ENCODE measurements at regions of chr1 and their contacts with region 1.

Region 1: DNA sequence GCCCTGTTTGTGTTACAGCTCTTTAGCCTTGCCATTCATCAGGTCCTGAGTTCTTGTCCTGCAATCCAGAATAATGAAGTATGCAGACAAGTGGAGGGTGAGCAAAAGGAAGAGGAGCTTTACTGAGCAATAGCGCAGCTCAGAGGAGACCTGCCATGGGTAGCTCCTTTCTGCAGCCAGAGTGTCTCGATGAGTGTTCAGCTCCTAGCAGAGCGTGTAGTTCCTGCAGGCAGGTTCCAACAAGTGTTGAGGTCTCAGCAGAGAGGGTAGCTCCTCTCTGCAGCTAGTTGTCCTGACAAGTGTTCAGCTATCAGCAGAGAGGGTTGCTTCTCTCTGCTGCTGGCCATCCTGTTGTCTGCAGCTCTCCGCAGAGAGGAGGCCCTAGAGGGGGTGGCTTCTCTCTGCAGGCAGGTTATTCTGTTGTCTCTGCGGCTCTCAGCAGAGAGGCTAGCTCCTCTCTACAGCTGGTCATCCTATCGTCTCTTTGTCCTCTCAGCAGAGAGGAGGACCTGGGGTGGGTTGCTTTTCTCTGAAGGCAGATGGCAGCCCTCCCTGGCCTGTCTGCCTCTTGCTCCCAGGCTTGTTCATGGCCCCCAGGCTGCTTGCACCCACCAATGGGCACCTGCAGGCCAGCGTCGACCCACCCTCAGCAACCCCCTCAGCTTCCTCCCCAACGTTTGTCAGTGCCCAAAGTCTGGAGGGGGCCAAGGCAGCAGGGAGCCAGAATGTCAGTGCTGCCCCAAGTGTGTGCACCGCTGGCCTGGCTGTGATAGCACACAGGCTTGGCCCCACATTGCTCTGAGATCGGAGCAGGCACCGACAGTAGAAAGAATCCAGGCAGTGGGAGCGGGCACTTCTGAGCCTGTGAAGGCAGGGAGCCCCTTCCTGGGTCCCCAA is 112.5 kb upstream of the RUNX3 start:
- DNase-seq: no peak
- H3K4me3 ChIP-seq: no peak overlapping the region
- H3K27ac ChIP-seq: no peak overlapping the region
- H3K4me1 ChIP-seq: no peaks in the 10 kb centered on the region
- H3K27me3 ChIP-seq: peaks cover 29% of the 10 kb centered on the region
- CTCF ChIP-seq: no peak

Region 2: DNA sequence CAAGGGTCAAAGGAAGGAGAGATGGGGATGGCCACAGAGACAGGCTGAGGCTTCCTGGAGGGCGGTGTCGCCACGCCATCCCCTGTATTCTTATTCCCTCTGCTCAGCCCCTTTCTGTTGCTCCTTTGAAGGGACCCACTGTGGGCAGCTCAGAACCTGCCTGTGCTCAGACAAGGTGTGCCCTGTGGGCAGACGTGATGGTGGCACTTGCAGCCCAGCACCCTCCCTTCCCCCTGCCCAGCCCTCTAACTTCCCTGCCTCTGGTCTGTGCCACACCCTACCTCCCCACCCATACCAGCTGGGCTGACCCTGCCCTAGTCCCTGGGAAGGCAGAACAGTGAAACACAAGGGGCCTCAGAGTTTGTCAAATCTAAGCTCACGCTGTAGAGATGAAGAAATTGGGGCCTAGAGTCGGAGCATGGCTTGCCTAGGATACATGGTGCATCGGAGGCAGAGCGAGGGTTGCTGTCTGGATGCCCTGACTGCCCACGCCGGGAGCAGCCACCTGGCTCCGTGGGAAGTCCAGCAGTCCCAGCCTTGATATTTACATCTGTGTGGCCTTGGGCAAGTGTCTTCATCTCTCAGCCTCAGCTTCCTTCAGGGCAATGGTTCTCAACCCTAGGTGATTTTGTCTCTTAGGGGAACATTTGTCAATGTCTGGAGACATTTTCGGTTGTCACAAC is 43.9 kb before region 1 on chr1:
- CTCF ChIA-PET with region 1: no interaction called
- POLR2A ChIA-PET with region 1: no interaction called
- intact Hi-C with region 1: loop called (anchors 2 kb)
- DNase-seq: no peak
- H3K4me3 ChIP-seq: no peak overlapping the region
- H3K27ac ChIP-seq: no peak overlapping the region
- H3K4me1 ChIP-seq: no peaks in the 10 kb centered on the region
- H3K27me3 ChIP-seq: no peaks in the 10 kb centered on the region
- CTCF ChIP-seq: no peak

Region 3: GRCh38 chr1:25065795-25066238 is 23.2 kb after region 1 on chr1:
- CTCF ChIA-PET with region 1: no interaction called
- POLR2A ChIA-PET with region 1: no interaction called
- intact Hi-C with region 1: no loop called
- DNase-seq: no peak
- H3K4me3 ChIP-seq: no peak overlapping the region
- H3K27ac ChIP-seq: no peak overlapping the region
- H3K4me1 ChIP-seq: no peaks in the 10 kb centered on the region
- H3K27me3 ChIP-seq: no peaks in the 10 kb centered on the region; the same call in 1 of the 2 replicates
- CTCF ChIP-seq: no peak

Measured in PC-9 (cell line).